Activated CD4-positive, alpha-beta T cell treated with anti-CD3 and anti-CD28 coated beads, Interleukin-2, amount 10 ng/mL, durations not matched to agents 7 days and 5 days (primary cell): ENCODE measurements at regions of chr19 and their contacts with region 1.

Region 1: GRCh38 chr19:11482384-11483050 is 1.7 kb upstream of the ELAVL3 start:
- DNase-seq: peak; percentile 83
- H3K4me3 Mint-ChIP-seq: peak overlapping the region; percentile 51
- H3K27ac Mint-ChIP-seq: peak overlapping the region; percentile 62
- H3K4me1 Mint-ChIP-seq: peaks cover 24% of the 10 kb centered on the region
- H3K27me3 Mint-ChIP-seq: peaks cover 31% of the 10 kb centered on the region

Region 2: DNA sequence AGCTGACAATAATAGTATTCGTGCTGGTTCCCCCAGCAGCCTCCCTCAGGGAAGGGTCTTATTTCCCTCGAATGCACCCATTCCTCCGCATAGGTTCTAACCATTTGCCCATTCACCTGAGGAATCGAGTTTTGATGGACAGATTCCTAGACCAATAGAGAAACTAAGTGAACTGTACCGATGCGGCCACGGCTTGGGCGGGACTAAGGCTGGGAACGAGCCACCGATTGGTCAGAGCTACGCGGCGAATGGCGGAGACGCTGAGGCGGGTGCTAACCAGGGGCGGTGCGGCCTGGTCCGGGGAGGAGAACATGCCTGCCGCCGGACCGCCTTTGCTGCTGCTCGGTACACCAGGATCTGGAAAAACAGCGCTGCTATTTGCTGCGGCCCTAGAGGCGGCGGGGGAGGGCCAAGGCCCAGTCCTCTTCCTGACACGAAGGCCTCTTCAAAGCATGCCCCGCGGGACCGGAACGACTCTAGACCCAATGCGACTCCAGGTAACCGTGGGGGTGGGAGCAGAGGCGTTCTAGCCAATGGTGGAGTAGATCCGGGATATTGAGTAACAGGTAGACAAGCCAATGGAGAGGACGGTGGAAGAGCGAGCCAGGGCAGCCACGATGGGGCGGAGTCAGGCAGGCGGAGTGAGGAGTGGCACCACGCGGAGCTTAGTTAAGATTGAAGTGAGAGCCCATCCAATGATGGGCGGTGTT is 107.9 kb before region 1 on chr19 and contains the start of gene SWSAP1:
- CTCF ChIA-PET with region 1: interaction called, 12 read pairs
- POLR2A ChIA-PET with region 1: no interaction called
- DNase-seq: peak; percentile 98
- H3K4me3 Mint-ChIP-seq: peak within 1 kb of the TSS; percentile 5
- H3K27ac Mint-ChIP-seq: no peak within 1 kb of the TSS
- H3K4me1 Mint-ChIP-seq: peaks cover 28% of the 10 kb centered on the region
- H3K27me3 Mint-ChIP-seq: no peaks in the 10 kb centered on the region
- total RNA-seq, gene SWSAP1: 2.9 to 3.5 TPM

Region 3: GRCh38 chr19:11463391-11463790 is 19.1 kb before region 1 on chr19:
- CTCF ChIA-PET with region 1: interaction called, 11 read pairs
- POLR2A ChIA-PET with region 1: no interaction called
- DNase-seq: no peak
- H3K4me3 Mint-ChIP-seq: no peak overlapping the region
- H3K27ac Mint-ChIP-seq: no peak overlapping the region
- H3K4me1 Mint-ChIP-seq: no peaks in the 10 kb centered on the region
- H3K27me3 Mint-ChIP-seq: peaks cover 2% of the 10 kb centered on the region

Region 4: DNA sequence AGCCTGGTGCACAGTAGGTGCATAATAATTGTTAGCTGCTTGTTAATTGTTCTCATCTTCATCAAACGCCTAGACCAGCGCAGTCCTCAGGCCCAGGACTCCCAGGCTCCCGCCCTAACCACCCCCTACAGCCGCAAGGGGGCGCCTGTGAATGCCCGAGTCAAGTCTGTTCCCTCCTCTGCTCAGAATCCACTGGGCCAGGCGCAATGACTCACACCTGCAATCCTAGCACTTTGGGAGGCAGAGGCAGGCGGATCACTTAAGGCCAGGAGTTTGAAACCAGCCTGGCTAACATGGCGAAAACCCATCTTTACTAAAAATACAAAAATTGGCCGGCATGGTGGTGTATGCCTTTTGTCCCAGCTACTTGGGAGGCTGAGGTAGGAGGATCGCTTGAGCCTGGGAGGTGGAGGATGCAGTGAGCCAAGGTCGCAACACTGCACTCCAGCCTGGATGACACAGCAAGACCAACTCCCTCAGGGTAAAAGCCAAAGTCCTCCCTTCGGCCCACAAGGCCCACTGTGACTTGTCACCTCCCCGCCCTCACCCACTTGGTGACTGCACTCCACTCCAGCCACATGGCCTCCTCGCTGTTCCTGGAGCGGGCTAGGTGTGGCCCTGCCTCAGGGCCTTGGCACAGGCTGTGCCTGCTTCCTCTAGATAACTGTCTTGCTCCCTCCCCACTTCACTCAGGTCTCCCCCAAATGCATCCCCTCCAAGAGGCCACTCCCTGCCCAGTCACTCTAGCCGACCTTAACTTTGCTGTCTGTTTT is 14.1 kb after region 1 on chr19:
- CTCF ChIA-PET with region 1: interaction called, 36 read pairs
- POLR2A ChIA-PET with region 1: no interaction called
- DNase-seq: peak; percentile 65
- H3K4me3 Mint-ChIP-seq: no peak overlapping the region
- H3K27ac Mint-ChIP-seq: peak overlapping the region; percentile 17
- H3K4me1 Mint-ChIP-seq: no peaks in the 10 kb centered on the region
- H3K27me3 Mint-ChIP-seq: no peaks in the 10 kb centered on the region

Region 5: DNA sequence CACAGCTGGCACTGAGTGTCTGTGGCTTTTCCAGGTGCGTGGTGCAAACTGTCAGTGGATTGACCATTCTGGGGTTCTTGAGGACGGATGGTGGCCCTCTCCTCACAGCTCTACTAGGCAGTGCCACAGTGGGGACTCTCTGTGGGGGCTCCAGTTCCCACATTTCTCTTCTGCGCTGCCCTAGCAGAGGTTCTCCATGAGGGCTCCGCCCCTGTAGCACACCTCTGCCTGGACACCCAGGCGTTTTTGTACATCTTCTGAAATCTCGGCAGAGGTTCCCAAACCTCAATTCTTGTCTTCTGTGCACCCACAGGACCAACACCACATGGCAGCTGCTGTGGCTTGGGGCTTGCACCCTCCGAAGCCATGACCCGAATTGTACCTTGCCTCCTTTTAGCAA is 124.0 kb after region 1 on chr19:
- CTCF ChIA-PET with region 1: no interaction called
- POLR2A ChIA-PET with region 1: no interaction called
- DNase-seq: no peak
- H3K4me3 Mint-ChIP-seq: no peak overlapping the region
- H3K27ac Mint-ChIP-seq: no peak overlapping the region
- H3K4me1 Mint-ChIP-seq: no peaks in the 10 kb centered on the region
- H3K27me3 Mint-ChIP-seq: no peaks in the 10 kb centered on the region